ENCODE measurements at regions of chr3 and their contacts with region 1.

Region 1: DNA sequence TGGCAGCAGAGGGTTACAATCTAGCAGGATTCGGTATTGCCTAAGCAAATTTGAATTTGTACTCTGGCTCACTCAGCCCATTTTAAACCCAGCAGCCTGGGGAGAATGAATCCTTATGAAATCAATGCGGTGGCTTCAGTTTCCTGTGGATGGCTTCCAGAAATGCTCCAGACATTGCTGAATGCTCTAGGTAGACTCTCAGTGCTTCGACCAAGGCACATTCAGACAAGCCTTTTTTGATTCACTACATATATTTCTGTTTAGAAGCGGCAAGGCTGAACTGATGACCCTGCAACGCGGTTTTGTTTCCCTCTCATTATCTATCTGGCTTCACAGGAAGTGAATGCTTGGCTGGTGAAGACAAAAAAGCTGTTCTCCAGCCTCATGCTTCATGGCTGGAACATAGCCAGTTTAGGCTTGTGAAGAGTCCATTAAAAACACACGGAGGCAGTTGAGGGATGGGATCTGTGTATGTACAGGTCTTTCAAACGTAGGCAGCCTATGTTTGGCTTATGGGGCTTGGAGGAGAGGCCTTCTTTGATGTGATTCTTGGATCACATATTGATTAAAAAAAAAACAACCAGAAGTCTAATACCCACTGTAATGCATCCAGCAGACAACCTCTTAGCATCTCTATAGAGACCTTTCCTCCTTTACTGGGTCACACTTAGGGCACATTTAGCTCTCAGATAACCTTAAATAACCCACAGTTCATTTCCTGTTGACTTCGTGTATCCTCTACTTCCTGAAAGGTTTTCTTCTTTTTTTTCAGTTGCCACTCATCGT is 400.2 kb upstream of the TBL1XR1 start:
- DNase-seq: peak; percentile 51
- ATAC-seq: peak; percentile 68
- H3K4me3 Mint-ChIP-seq: peak overlapping the region; percentile 45
- H3K27ac Mint-ChIP-seq: peak overlapping the region; percentile 88
- H3K4me1 Mint-ChIP-seq: peaks cover 70% of the 10 kb centered on the region
- H3K27me3 Mint-ChIP-seq: no peaks in the 10 kb centered on the region

Region 2: DNA sequence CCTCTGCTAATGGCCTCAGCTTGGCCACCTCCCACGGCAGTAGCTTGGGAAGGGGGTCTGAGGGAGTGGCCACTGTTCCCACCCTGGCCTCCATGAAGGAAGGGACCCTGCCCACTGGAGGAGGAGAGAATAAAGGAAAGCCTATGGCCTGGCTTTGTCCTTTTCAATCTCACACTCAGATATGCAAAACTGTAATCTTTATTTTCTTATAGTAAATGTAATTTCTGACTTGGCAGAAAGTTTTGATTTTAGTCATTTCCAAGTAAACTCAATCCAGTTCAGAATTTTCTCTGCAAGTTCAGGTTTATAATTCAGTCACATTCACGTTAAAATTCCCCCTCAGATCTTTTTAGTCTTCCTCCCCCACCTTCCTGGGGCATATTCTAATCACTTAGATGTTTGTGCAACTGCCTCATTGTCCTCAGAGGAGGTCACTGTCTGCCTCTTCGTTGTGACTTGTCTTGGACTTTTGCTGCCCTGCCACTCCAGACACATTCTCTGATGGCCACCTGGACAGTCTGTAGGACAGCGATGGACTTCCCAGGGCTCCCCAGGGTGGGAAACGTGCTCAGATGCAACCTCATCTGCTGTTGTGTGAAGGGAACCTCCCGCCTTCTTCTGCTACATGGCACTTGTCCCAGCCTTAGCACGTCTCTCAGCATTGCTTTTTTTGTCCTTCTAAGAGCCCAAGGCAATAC is 177.5 kb before region 1 on chr3:
- CTCF ChIA-PET with region 1: no interaction called
- POLR2A ChIA-PET with region 1: no interaction called
- intact Hi-C with region 1: loop called (anchors 5 kb)
- DNase-seq: peak; percentile 31
- ATAC-seq: peak; percentile 93
- H3K4me3 Mint-ChIP-seq: peak overlapping the region; percentile 37
- H3K27ac Mint-ChIP-seq: peak overlapping the region; percentile 86
- H3K4me1 Mint-ChIP-seq: peaks cover 38% of the 10 kb centered on the region
- H3K27me3 Mint-ChIP-seq: no peaks in the 10 kb centered on the region

Region 3: GRCh38 chr3:177777699-177778098 is 180.2 kb after region 1 on chr3:
- CTCF ChIA-PET with region 1: no interaction called
- POLR2A ChIA-PET with region 1: no interaction called
- intact Hi-C with region 1: loop called in 1 of 2 experiments (anchors 10 kb)
- DNase-seq: peak; percentile 63
- ATAC-seq: peak; percentile 77
- H3K4me3 Mint-ChIP-seq: no peak overlapping the region
- H3K27ac Mint-ChIP-seq: no peak overlapping the region
- H3K4me1 Mint-ChIP-seq: peaks cover 14% of the 10 kb centered on the region
- H3K27me3 Mint-ChIP-seq: no peaks in the 10 kb centered on the region